ENCODE measurements at regions of chr9 and their contacts with region 1.

Region 1: DNA sequence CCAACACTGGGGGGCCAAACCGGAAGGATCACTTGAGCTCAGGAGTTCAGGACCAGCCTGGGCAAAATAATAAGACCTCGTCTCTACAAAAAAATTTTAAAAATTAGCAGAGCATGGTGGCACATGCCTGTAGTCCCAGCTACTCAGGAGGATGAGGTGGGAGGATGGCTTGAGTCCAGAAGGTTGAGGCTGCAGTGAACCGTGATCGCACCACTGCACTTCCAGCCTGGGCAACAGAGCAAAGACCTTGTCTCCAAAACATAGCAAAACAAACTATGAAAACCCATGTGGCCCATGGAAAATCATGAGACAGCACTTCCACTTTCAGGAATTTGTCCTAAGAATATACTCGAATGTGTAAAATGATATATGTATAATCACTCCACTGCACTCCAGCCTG is 6.1 kb downstream of the SETX start:
- DNase-seq: no peak
- H3K4me3 ChIP-seq: no peak overlapping the region
- H3K27ac ChIP-seq: no peak overlapping the region
- H3K4me1 ChIP-seq: peaks cover 23% of the 10 kb centered on the region
- H3K27me3 ChIP-seq: no peaks in the 10 kb centered on the region
- CTCF ChIP-seq: no peak

Region 2: DNA sequence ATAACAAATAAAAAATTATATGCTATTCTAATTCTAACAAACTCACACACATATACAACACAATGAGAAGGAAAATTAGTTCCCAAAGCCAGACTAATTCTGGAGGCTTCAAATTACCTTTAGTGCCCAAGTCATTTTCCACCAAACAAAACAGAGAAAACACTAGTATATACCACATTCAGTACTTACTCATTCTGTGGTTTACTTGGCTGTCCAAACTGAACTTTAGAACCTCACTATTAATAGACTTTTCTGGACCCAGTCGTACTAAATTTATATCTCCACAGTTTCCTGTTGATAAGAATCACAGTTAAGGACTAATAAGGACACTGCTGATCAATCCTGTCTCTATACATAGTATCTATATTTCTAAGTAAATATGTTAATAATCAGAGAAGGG is 60.3 kb before region 1 on chr9:
- CTCF ChIA-PET with region 1: no interaction called
- dilution Hi-C with region 1: no loop called
- in situ Hi-C with region 1: no loop called
- intact Hi-C with region 1: loop called (anchors 5 kb)
- DNase-seq: peak; percentile 9
- H3K4me3 ChIP-seq: no peak overlapping the region
- H3K27ac ChIP-seq: no peak overlapping the region
- H3K4me1 ChIP-seq: no peaks in the 10 kb centered on the region
- H3K27me3 ChIP-seq: no peaks in the 10 kb centered on the region
- CTCF ChIP-seq: no peak

Region 3: DNA sequence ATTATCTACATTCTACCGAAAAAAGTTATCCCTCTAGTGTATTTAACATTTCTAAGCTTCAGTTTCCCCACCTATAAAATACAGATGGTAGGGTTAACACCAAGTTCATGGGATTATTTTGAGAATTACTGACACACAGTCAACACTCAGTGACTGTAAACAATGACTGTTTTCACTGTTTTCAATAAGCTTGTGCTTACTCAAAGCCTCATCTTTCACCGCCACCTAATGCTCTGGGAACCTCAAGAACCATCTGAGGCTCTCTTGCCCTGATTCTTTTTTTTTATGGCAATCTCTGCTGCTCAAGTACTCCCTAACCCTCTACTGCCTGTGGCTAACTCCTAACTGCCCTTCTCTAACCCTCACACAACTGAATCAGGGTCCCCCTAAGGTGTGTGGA is 53.5 kb before region 1 on chr9:
- CTCF ChIA-PET with region 1: no interaction called
- dilution Hi-C with region 1: loop called (anchors 5 kb)
- in situ Hi-C with region 1: no loop called
- intact Hi-C with region 1: no loop called
- DNase-seq: no peak
- H3K4me3 ChIP-seq: no peak overlapping the region
- H3K27ac ChIP-seq: no peak overlapping the region
- H3K4me1 ChIP-seq: no peaks in the 10 kb centered on the region
- H3K27me3 ChIP-seq: no peaks in the 10 kb centered on the region
- CTCF ChIP-seq: no peak